ENCODE measurements at regions of chr1 and their contacts with region 1.

Region 1: DNA sequence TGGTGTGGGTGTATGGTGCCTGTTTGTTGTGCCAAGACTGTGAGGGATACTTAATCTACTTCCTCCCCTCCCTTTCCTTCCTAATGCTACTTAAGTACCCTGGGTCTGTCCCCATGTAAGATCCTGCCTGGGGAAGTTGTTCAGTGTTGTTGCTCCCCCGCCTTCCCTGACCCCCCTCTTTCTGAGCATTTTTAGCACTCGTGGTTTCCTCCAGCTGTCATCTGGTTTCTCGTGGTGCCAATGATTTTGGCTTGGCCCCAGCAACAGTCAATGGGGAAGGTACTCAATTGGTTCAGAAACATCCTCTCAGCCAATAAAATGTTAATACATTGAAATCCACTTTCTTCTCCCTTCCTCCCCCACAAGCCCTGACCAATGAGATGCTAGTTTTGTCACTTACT is 8.0 kb upstream of the B4GALT3 start:
- DNase-seq: peak; percentile 98
- ATAC-seq: peak; percentile 84
- H3K4me3 ChIP-seq: no peak overlapping the region
- H3K27ac ChIP-seq: peak overlapping the region; percentile 97
- H3K4me1 ChIP-seq: peaks cover 57% of the 10 kb centered on the region
- H3K27me3 ChIP-seq: no peaks in the 10 kb centered on the region
- CTCF ChIP-seq: no peak
- EP300 ChIP-seq: no peak; a peak in 1 of 4 replicates
- POLR2A ChIP-seq: peak; percentile 42; the same call in 1 of the 2 replicates
- RAD21 ChIP-seq: no peak

Region 2: GRCh38 chr1:161201828-161202725 is 16.8 kb after region 1 on chr1 and contains the start of gene NDUFS2:
- CTCF ChIA-PET with region 1: interaction called, 16 read pairs
- POLR2A ChIA-PET with region 1: interaction called, 8 read pairs
- RAD21 ChIA-PET with region 1: interaction called, 19 read pairs
- SMC1A ChIA-PET with region 1: interaction called, 22 read pairs
- in situ Hi-C with region 1: no loop called
- intact Hi-C with region 1: no loop called
- DNase-seq: peak; percentile 94
- ATAC-seq: peak; percentile 99
- H3K4me3 ChIP-seq: peak within 1 kb of the TSS; percentile 95
- H3K27ac ChIP-seq: peak within 1 kb of the TSS; percentile 86
- H3K4me1 ChIP-seq: peaks cover 21% of the 10 kb centered on the region
- H3K27me3 ChIP-seq: no peaks in the 10 kb centered on the region
- CTCF ChIP-seq: peak in 1 of 3 experiments; percentile 5; a peak in 2 of 6 replicates
- EP300 ChIP-seq: no peak
- POLR2A ChIP-seq: peak; percentile 96
- RAD21 ChIP-seq: no peak
- polyA plus RNA-seq, gene NDUFS2: 66.5 to 93.9 TPM

Region 3: GRCh38 chr1:161209790-161210409 is 24.6 kb after region 1 on chr1:
- CTCF ChIA-PET with region 1: interaction called, 28 read pairs
- POLR2A ChIA-PET with region 1: interaction called, 5 read pairs
- RAD21 ChIA-PET with region 1: no interaction called
- SMC1A ChIA-PET with region 1: interaction called, 8 read pairs
- in situ Hi-C with region 1: no loop called
- intact Hi-C with region 1: no loop called
- DNase-seq: no peak
- ATAC-seq: peak; percentile 99
- H3K4me3 ChIP-seq: no peak overlapping the region
- H3K27ac ChIP-seq: no peak overlapping the region
- H3K4me1 ChIP-seq: no peaks in the 10 kb centered on the region
- H3K27me3 ChIP-seq: no peaks in the 10 kb centered on the region
- CTCF ChIP-seq: peak; percentile 88 to 94 (median 89)
- EP300 ChIP-seq: no peak
- POLR2A ChIP-seq: no peak
- RAD21 ChIP-seq: peak; percentile 93

Region 4: GRCh38 chr1:161216945-161217712 is 31.8 kb after region 1 on chr1:
- CTCF ChIA-PET with region 1: interaction called, 164 read pairs
- POLR2A ChIA-PET with region 1: no interaction called
- RAD21 ChIA-PET with region 1: interaction called, 6 read pairs
- SMC1A ChIA-PET with region 1: interaction called, 9 read pairs
- in situ Hi-C with region 1: no loop called
- intact Hi-C with region 1: no loop called
- DNase-seq: peak; percentile 92
- ATAC-seq: peak; percentile 95
- H3K4me3 ChIP-seq: peak overlapping the region; percentile 8; the same call in 1 of the 2 replicates
- H3K27ac ChIP-seq: peak overlapping the region; percentile 24
- H3K4me1 ChIP-seq: peaks cover 21% of the 10 kb centered on the region
- H3K27me3 ChIP-seq: no peaks in the 10 kb centered on the region
- CTCF ChIP-seq: no peak
- EP300 ChIP-seq: peak; percentile 11 to 73; a peak in 1 of 4 replicates
- POLR2A ChIP-seq: no peak
- RAD21 ChIP-seq: no peak